ENCODE measurements at regions of chr20 and their contacts with region 1.

Region 1: DNA sequence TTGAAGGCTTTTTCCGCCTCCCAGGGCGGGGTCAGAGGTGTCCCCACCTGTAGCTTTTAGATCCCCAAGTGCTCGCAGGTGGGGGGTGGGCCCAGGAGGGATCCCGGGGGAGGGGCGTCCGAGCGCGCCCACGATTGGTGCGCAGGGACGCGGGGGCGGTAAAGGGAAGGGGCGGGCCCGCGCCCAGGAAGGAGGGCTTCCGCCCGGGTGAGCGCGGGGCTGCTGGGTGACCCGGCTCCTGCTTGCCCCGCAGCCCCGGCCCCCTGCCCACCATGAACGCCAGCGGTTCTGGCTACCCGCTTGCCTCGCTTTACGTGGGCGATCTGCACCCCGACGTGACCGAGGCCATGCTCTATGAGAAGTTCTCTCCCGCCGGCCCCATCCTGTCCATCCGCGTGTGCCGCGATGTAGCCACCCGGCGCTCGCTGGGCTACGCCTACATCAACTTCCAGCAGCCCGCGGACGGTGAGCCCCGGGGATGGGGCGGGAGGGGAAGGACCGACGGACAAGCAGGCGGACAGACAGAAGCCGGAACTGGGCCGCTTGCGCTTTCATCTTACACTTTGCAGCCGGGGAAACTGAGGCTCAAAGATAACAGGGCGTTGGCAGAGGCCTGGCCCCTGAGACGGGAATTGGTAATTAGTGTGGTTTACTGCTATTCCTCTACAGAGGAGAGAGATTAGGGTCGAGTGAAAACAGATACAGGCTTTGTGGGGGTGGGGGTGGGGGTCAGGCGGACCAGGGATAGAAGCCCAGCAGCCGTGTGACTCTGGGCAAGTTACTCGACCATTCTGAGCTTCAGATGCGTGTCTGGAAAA is at the start of gene PABPC1L:
- DNase-seq: peak; percentile 68
- H3K4me3 Mint-ChIP-seq: peak within 1 kb of the TSS; percentile 86
- H3K27ac Mint-ChIP-seq: peak within 1 kb of the TSS; percentile 58
- H3K4me1 Mint-ChIP-seq: peaks cover 27% of the 10 kb centered on the region
- H3K27me3 Mint-ChIP-seq: no peaks in the 10 kb centered on the region
- total RNA-seq, gene PABPC1L: 83.6 and 94.1 TPM in 2 replicates

Region 2: DNA sequence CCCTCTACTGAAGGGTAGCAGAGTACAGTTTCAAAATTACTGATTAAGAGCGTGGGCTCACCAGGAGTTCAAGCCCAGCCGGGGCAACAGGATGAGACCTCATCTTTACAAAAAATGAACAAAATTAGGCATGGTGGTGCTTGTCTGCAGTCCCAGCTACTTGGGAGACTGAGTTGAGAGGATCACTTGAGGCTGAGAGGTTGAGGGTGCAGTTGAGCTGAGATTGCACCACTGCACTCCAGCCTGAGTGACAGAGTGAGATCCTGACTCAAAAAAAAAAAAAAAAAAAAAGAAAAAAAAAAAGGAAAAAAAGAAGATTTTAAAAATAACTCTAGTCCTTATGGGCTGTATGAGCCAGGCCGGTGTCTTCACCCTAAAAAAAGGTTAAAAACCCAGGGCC is 18.5 kb after region 1 on chr20:
- intact Hi-C with region 1: no loop called
- DNase-seq: no peak
- H3K4me3 Mint-ChIP-seq: no peak overlapping the region
- H3K27ac Mint-ChIP-seq: no peak overlapping the region
- H3K4me1 Mint-ChIP-seq: no peaks in the 10 kb centered on the region
- H3K27me3 Mint-ChIP-seq: no peaks in the 10 kb centered on the region

Region 3: DNA sequence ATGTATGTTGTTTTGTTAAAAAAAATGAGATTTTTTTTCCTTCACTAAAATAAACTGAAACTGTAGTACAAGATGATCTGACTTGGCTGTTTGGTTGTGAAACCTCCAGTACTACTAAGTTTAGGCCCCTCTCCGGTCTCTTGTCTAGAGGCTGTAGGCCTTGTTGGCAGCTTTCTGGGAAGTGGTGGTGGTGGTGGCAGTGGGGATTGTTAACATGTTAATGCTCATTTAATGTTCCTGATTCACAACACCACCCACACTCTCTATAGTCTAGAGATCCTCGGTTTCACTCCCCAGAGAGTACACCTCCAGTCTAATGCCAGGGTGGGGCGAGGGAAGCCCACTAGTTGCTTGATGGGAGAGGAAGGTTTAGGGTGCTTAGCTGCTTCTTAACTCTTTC is 80.3 kb after region 1 on chr20:
- intact Hi-C with region 1: loop called (anchors 2 kb)
- DNase-seq: no peak
- H3K4me3 Mint-ChIP-seq: peak overlapping the region; percentile 74
- H3K27ac Mint-ChIP-seq: peak overlapping the region; percentile 90
- H3K4me1 Mint-ChIP-seq: peaks cover 66% of the 10 kb centered on the region
- H3K27me3 Mint-ChIP-seq: no peaks in the 10 kb centered on the region

Region 4: GRCh38 chr20:45266977-45267376 is 356.9 kb after region 1 on chr20:
- intact Hi-C with region 1: no loop called
- DNase-seq: no peak
- H3K4me3 Mint-ChIP-seq: no peak overlapping the region
- H3K27ac Mint-ChIP-seq: no peak overlapping the region
- H3K4me1 Mint-ChIP-seq: no peaks in the 10 kb centered on the region
- H3K27me3 Mint-ChIP-seq: peaks cover 46% of the 10 kb centered on the region